ENCODE measurements at regions of chr7 and their contacts with region 1.

Region 1: GRCh38 chr7:139075031-139075652 is 34.4 kb downstream of the ZC3HAV1 start:
- DNase-seq: peak in 4 of 5 donors; percentile 70 to 77 (median 72)
- ATAC-seq: peak; percentile 73 to 91 (median 90)
- H3K4me3 ChIP-seq: no peak overlapping the region
- H3K27ac ChIP-seq: peak overlapping the region in 6 of 12 donors; percentile 23 to 62 (median 40)
- H3K4me1 ChIP-seq: peaks cover 0 to 32% (median 5%) of the 10 kb centered on the region in 12 donors
- H3K27me3 ChIP-seq: no peaks in the 10 kb centered on the region
- CTCF ChIP-seq: peak; percentile 71 to 91 (median 86)
- POLR2A ChIP-seq: no peak

Region 2: DNA sequence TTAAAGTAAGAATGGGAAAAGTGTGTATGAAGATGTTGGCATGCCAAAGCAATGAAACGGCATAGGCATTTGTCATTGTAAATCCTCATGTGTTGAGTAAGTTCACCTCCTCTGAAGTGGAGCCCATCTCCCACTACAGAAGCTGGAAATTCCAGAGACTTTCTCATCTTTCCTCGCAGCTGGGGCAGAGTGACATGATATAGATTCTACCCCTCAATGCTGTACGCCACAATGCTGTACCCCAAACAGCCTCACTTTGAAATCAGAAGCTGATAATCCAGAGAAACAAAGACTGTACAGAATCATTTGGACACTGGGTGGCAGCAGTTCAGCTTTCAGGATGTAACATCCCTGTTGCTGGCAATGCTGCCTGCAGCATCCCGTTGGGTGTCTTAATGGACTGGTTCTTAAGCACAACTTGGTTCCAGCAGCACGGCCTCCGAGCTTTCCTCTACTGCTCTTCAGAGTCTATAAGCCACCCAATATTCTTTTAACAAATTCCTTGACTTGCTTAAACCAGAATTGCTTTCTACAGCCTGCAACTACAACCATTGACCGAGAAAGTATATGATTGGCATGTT is 58.1 kb before region 1 on chr7:
- intact Hi-C with region 1: loop called (anchors 1 to 5 kb)
- DNase-seq: peak in 4 of 5 donors; percentile 58 to 76 (median 62)
- ATAC-seq: peak; percentile 26 to 87 (median 74)
- H3K4me3 ChIP-seq: no peak overlapping the region
- H3K27ac ChIP-seq: no peak overlapping the region
- H3K4me1 ChIP-seq: peaks cover 0 to 7% (median 0%) of the 10 kb centered on the region in 12 donors
- H3K27me3 ChIP-seq: no peaks in the 10 kb centered on the region
- CTCF ChIP-seq: peak; percentile 48 to 79 (median 65)
- POLR2A ChIP-seq: no peak

Region 3: DNA sequence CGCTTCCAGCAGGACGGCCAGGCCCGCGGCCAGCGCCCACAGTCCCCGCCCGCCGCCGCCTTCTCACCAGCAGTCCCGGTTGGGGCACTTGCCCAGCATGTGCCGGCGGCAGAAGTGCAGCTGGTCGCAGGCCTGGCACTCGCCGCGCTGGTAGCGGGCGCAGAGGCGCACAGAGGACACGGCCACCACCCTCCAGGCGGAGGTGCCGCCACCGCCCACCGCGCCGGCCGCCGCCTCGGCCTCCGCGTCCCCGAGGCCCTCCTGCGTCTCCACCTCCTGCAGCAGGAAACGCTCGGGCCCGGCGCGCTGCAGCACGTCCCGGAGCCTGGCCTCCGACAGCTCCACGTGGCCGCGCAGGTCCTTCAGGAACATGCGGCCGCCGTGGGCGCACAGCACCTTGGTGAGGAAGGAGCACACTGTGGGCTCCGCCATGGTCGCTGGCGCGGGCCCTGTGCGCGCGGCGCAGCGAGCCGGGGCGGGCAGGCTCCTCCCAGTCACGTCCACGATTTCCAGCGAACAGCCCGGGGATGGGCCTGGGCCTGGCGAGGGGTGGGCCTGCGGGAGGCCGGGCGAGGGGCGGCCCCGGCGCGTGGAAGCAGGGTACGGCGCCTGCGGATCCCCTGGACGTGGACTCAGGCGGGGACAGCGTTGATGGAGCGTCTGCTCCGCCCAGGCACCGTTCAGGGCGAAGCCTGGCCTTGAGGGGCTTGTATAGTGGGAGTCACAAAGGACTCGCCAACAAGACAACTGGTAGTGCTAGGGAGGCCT is 39.4 kb before region 1 on chr7 and contains the start of gene ZC3HAV1L:
- intact Hi-C with region 1: loop called in 3 of 10 experiments (anchors 5 kb)
- DNase-seq: peak; percentile 67 to 85 (median 71)
- ATAC-seq: peak; percentile 69 to 96 (median 88)
- H3K4me3 ChIP-seq: peak within 1 kb of the TSS; percentile 46 to 93 (median 83)
- H3K27ac ChIP-seq: peak within 1 kb of the TSS; percentile 64 to 88 (median 81)
- H3K4me1 ChIP-seq: peaks cover 0 to 26% (median 12%) of the 10 kb centered on the region in 12 donors
- H3K27me3 ChIP-seq: no peaks in the 10 kb centered on the region
- CTCF ChIP-seq: no peak
- POLR2A ChIP-seq: peak in 1 of 2 donors; percentile 39
- total RNA-seq, gene ZC3HAV1L: 1.7 to 6.2 (median 3.7) TPM